Activated B cell treated with CpG ODN at 0.5 μM for 24 hours (primary cell): ENCODE measurements at regions of chr1 and their contacts with region 1.

Region 1: GRCh38 chr1:20786253-20787028 is 666 bp downstream of the HP1BP3 start:
- DNase-seq: peak; percentile 97
- ATAC-seq: peak; percentile 74
- H3K4me3 Mint-ChIP-seq: peak overlapping the region; percentile 99
- H3K27ac Mint-ChIP-seq: peak overlapping the region; percentile 97
- H3K4me1 Mint-ChIP-seq: peaks cover 39% of the 10 kb centered on the region
- H3K27me3 Mint-ChIP-seq: no peaks in the 10 kb centered on the region
- CTCF ChIP-seq: no peak

Region 2: DNA sequence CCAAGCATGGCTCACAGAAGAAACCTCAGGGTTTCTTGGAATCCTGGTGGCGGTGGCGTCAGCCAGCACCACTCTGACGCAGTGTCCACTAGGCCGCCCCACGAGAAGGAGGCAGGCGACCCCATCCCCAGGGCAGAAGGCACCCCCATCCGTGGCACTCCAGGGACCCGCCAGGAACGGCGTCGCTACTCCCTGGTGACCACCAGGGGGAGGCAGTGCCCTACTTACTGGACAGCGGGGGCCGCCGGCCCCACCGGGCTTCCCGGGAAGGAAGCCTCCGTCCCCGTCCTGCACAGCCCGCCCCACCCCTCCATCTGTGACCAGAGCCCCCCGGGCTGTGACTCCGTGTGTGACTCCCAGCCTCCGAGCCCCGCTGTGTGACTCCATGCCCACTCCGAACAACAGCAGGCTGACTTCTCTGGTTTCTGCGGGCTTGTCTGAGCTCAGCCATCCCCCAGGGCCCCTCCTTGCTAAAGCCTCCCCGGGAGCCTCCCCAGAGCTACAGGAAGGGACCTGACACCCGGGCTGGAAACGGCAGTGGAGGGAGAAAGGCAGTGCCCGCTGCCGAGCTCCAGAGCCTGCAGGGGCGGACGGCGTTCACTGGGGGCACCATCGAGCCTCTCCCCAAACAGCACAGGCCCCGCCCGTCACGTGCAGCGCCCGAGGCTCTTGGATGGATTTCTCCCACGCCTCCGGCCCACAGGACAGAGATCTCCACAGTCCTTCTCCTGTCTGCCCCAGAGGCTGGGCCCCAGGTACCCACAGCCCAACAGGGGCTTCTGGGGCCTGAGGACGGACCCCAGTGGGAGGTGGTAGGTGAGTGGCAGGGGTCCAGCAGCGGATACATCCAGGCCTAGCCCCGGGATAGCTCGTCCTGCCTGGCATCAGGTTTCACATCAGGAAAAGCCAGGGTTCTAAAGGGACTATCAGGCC is 89.8 kb before region 1 on chr1:
- CTCF ChIA-PET with region 1: no interaction called
- POLR2A ChIA-PET with region 1: interaction called, 5 read pairs
- intact Hi-C with region 1: loop called (anchors 2 kb)
- DNase-seq: peak; percentile 67
- ATAC-seq: peak; percentile 95
- H3K4me3 Mint-ChIP-seq: peak overlapping the region; percentile 87
- H3K27ac Mint-ChIP-seq: no peak overlapping the region
- H3K4me1 Mint-ChIP-seq: peaks cover 4% of the 10 kb centered on the region
- H3K27me3 Mint-ChIP-seq: no peaks in the 10 kb centered on the region
- CTCF ChIP-seq: peak; percentile 72

Region 3: DNA sequence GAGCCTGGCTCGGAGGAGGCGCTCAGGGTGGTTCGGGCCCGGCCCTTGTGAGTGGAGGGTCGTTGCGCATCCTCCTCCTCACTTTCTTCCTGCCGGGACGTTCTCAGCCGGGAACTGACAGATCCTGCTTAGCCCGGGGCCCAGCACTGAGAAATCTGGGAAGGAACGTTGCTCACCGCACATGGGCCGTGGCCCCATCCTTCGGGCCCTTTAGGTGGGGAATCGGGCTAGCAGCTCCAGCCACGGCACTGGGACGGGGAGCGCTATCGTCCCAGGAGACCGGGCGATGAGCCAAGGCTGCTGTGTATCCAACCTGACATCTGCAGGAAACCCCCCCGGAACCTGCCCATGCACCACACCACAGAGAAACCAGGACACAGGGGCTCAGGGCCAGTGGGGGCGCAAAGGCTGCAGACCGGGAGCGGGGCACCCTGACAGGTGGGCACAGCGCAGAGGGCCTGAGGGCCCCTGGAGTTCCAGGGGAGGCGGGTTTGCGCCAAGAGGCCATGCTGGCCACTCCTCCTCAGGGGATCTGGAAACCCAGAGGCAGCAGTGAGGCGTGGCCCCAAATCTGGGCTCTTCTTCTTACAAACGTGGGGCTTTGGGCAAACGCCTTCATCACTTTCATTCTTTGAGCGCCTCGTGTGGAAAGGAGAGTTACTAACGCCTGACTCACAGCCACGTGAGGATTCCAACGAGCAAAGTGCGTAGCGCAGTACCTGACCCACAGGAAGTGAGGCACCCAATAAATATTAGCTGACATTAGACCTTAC is 53.7 kb before region 1 on chr1 and contains the start of gene SH2D5:
- CTCF ChIA-PET with region 1: no interaction called
- POLR2A ChIA-PET with region 1: interaction called, 10 read pairs
- intact Hi-C with region 1: loop called (anchors 1 kb)
- DNase-seq: peak; percentile 45
- ATAC-seq: peak; percentile 74
- H3K4me3 Mint-ChIP-seq: peak within 1 kb of the TSS; percentile 85
- H3K27ac Mint-ChIP-seq: peak within 1 kb of the TSS; percentile 62
- H3K4me1 Mint-ChIP-seq: peaks cover 29% of the 10 kb centered on the region
- H3K27me3 Mint-ChIP-seq: peaks cover 11% of the 10 kb centered on the region
- CTCF ChIP-seq: no peak
- total RNA-seq, gene SH2D5: 0.69 and 0.89 TPM in 2 replicates

Region 4: DNA sequence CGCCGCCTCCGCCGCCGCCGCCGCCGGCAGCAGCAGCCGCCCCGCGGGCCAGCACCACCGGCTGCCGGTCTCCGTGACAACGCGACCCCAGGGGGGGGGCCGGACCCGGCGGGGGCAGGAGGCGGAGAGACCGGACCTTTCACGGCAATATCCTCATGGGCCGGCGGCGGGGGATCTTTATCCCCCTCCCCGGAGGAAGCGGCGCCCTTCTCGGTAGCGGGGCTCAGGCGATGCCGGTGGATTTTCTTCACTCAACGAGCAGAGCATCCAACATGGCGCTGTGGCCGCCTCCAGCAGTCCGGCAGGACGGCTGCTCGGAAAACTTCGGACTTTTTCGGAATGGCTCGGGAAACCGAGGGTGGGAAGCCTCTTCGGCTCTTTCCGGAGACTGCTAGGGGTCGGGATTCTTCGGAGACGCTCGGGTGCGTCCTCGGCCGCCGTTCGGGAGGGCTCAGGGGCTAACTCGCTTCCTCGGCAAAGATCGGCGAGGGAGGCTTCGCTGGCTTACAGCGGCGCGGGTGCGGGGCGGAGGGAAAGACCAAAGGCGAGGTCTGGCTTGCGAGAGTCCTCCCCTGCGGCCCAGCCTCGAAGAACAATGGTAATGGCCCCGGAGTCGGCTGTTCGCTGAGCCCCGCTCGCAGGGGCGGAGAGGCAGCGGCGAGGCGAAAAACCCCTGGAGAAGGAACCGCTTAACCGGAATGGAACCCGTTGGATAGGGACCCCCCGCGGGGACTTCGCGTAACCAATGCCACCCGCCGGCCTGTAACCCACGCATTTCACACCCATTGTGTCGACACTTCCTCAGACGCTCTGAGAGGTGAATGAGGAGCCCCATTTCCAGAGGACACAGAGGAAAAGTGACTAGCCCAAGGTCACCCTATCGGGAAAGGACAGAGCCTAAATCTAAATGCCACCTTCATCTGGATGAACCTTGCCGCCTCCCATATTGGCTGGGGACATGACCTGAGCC is 390.4 kb after region 1 on chr1 and contains the start of gene EIF4G3:
- CTCF ChIA-PET with region 1: no interaction called
- POLR2A ChIA-PET with region 1: interaction called, 5 read pairs
- intact Hi-C with region 1: loop called (anchors 2 kb)
- DNase-seq: peak; percentile 99
- ATAC-seq: peak; percentile 96
- H3K4me3 Mint-ChIP-seq: peak within 1 kb of the TSS; percentile 91
- H3K27ac Mint-ChIP-seq: peak within 1 kb of the TSS; percentile 92
- H3K4me1 Mint-ChIP-seq: peaks cover 24% of the 10 kb centered on the region
- H3K27me3 Mint-ChIP-seq: no peaks in the 10 kb centered on the region
- CTCF ChIP-seq: no peak
- total RNA-seq, gene EIF4G3: 68.4 and 81.3 TPM in 2 replicates

Region 5: GRCh38 chr1:21782868-21783678 is 996.6 kb after region 1 on chr1 and contains the start of gene USP48:
- CTCF ChIA-PET with region 1: no interaction called
- POLR2A ChIA-PET with region 1: no interaction called
- intact Hi-C with region 1: loop called (anchors 5 kb)
- DNase-seq: peak; percentile 97
- ATAC-seq: peak; percentile 78
- H3K4me3 Mint-ChIP-seq: peak within 1 kb of the TSS; percentile 90
- H3K27ac Mint-ChIP-seq: peak within 1 kb of the TSS; percentile 100
- H3K4me1 Mint-ChIP-seq: peaks cover 30% of the 10 kb centered on the region
- H3K27me3 Mint-ChIP-seq: no peaks in the 10 kb centered on the region
- CTCF ChIP-seq: no peak
- total RNA-seq, gene USP48: 86.3 and 97.3 TPM in 2 replicates